ENCODE measurements at regions of chr11 and their contacts with region 1.

Region 1: DNA sequence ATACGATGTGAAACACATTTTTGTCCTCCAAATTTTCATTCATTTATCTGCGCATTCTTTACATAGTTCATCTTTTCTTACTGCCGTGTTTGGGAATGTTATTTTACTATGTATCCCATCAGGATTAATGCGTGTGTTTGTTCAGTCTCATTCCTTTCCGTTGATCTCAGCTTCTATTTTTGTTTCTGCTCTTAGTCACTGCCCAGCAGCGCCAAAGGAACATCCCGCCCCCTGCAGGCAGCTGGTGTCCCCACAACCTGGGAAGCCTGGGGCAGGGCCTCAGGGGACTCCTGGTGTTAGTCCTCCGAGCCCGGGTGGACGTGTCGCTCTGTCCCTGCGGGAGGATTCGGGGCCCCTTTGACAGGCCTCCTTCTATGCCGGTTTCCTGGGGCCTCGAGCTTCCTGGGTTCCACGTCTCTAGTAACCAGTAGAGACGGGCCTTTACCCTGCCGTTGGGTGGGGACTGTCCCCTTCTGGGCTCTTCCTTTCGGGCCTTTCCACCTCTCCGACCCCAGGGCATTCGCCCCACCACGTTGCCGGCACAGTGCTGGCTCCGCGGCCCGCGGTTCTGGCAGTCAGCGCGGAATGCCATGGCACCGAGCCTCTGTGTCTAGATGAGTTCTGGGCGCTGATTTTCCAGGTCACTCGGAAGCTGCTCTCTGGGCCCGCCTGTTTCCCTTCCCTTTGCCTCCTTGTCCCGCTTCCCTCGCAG is 39.8 kb downstream of the WEE1 start:
- DNase-seq: peak; percentile 97
- H3K4me3 Mint-ChIP-seq: peak overlapping the region; percentile 72
- H3K27ac Mint-ChIP-seq: peak overlapping the region; percentile 93
- H3K4me1 Mint-ChIP-seq: peaks cover 33% of the 10 kb centered on the region
- H3K27me3 Mint-ChIP-seq: no peaks in the 10 kb centered on the region
- CTCF ChIP-seq: peak; percentile 81

Region 2: DNA sequence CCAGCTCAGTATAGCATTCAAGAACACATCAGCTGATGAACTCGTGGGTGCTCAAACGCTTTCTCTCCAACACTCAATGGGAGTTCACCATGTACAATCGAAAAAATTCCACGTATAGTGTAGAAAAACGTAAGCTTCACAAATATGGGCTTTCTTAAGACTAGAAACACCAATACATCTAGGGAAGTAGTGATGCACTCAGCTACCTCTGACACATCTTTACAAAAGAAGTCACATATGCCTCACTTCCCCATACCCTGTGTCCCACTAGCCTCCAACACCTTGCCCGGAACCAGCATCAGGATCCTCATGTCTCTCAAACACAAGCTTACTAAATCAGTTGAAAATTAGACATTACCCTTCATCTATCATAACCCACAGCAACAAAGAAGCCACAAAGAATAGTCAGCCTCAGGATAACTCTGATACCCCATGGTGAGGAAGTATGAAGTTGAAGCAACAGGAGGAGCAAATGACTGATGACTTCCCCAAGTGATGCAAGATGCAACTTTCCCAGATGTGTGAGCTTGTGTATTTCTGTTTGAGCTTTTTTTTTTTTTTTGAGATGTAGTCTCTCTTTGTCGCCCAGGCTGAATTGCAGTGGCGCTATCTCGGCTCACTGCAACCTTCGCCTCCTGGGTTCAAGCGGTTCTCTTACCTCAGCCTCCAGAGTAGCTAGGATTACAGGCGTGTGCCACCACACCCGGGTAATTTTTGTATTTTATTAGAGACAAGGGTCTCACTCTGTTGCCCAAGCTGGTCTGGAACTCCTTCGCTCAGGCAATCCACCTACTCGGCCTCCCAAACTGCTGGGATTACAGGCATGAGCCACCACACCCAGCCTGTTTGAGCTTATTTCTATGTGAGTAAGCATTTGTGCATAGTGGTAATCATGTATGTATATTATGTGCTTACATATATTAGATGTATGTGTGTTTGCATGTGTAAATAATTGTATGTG is 339.6 kb before region 1 on chr11:
- CTCF ChIA-PET with region 1: no interaction called
- intact Hi-C with region 1: no loop called
- DNase-seq: no peak
- H3K4me3 Mint-ChIP-seq: no peak overlapping the region
- H3K27ac Mint-ChIP-seq: peak overlapping the region; percentile 39
- H3K4me1 Mint-ChIP-seq: no peaks in the 10 kb centered on the region
- H3K27me3 Mint-ChIP-seq: no peaks in the 10 kb centered on the region
- CTCF ChIP-seq: no peak

Region 3: DNA sequence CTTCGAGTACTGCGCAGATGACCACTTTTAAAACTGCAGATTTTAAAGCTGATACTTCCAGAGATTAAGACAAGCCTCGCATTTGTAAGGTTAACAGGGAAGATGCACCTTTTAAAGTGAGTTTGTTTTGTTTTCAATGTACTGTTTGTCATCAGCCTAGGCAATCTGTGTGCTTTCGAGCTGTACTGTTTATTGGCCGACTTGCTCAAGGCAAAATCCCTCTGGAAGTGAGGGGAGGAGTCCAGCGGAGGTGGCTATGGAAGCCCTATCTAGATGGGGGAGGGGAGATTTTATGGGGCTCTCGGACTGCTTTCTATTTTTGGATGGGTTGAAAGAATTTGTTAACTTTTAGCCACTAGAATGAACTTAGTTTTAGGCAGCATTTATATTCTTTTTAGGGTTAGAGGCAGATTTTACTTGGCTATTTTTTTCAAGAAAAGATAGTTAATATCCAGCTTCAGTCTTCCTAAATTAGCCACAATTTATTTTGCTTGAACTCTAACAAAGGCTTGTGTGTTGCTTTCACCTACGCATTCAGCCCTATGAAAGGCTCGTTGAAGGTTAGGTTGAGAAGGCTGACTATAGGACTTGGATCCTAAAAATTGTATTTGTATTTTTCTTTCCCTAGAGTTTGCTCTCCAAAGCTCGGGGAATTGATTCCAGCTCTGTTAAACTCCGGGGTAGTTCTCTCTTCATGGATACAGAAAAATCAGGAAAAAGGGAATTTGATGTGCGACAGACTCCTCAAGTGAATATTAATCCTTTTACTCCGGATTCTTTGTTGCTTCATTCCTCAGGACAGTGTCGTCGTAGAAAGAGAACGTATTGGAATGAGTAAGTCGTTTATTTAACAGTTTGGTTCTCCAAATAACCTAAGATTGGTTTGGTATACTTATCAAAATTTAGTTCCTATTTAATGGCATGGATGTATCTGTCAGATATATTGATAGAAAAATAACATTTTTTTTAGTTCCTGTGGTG is 37.7 kb before region 1 on chr11:
- CTCF ChIA-PET with region 1: interaction called, 3 read pairs
- intact Hi-C with region 1: loop called (anchors 5 kb)
- DNase-seq: peak; percentile 76
- H3K4me3 Mint-ChIP-seq: peak overlapping the region; percentile 87
- H3K27ac Mint-ChIP-seq: peak overlapping the region; percentile 95
- H3K4me1 Mint-ChIP-seq: peaks cover 45% of the 10 kb centered on the region
- H3K27me3 Mint-ChIP-seq: no peaks in the 10 kb centered on the region
- CTCF ChIP-seq: no peak

Region 4: GRCh38 chr11:9663699-9664275 is 50.5 kb after region 1 on chr11 and contains the start of gene SWAP70:
- CTCF ChIA-PET with region 1: no interaction called
- intact Hi-C with region 1: loop called (anchors 5 kb)
- DNase-seq: peak; percentile 93
- H3K4me3 Mint-ChIP-seq: peak within 1 kb of the TSS; percentile 86
- H3K27ac Mint-ChIP-seq: peak within 1 kb of the TSS; percentile 61
- H3K4me1 Mint-ChIP-seq: peaks cover 9% of the 10 kb centered on the region
- H3K27me3 Mint-ChIP-seq: no peaks in the 10 kb centered on the region
- CTCF ChIP-seq: no peak
- total RNA-seq, gene SWAP70: 19.9 and 20.7 TPM in 2 replicates

Region 5: GRCh38 chr11:9748361-9748970 is 135.2 kb after region 1 on chr11:
- CTCF ChIA-PET with region 1: interaction called, 16 read pairs
- intact Hi-C with region 1: loop called (anchors 1 kb)
- DNase-seq: peak; percentile 51
- H3K4me3 Mint-ChIP-seq: no peak overlapping the region
- H3K27ac Mint-ChIP-seq: no peak overlapping the region
- H3K4me1 Mint-ChIP-seq: peaks cover 8% of the 10 kb centered on the region
- H3K27me3 Mint-ChIP-seq: no peaks in the 10 kb centered on the region
- CTCF ChIP-seq: peak; percentile 71

Region 6: GRCh38 chr11:9972989-9973388 is 359.7 kb after region 1 on chr11:
- CTCF ChIA-PET with region 1: no interaction called
- intact Hi-C with region 1: loop called (anchors 10 kb)
- DNase-seq: peak; percentile 13
- H3K4me3 Mint-ChIP-seq: no peak overlapping the region
- H3K27ac Mint-ChIP-seq: no peak overlapping the region
- H3K4me1 Mint-ChIP-seq: no peaks in the 10 kb centered on the region
- H3K27me3 Mint-ChIP-seq: no peaks in the 10 kb centered on the region
- CTCF ChIP-seq: no peak

Measured in Calu3 (cell line).